Mammary epithelial cell (primary cell): ENCODE measurements at regions of chr12 and their contacts with region 1.

Region 1: DNA sequence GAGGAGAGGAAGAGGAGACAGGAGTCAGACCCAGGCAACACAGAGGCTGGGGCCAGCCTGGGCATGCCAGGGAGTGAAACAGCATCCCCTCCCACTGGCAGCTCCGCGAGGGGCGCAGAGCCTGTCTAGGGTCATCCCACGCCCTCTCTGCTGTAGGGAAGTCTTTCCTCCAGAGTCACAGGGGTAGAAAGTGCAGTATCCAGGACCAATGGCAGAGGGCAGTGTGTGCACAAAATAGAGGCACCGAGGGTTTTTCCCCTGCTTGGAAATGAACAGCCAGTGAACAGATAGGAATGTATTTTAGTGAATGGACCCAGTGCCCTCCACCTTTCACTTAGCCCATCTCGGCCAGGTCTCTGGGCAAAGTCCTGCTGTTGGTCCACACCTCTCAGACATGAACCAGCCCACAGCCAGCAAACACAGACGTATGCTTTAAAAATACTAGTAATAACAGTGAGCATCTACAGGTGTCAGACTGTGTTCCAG is 9.4 kb upstream of the KRT74 start:
- DNase-seq: peak; percentile 87
- H3K4me3 ChIP-seq: no peak overlapping the region
- H3K27ac ChIP-seq: peak overlapping the region; percentile 68
- H3K4me1 ChIP-seq: peaks cover 53% of the 10 kb centered on the region
- H3K27me3 ChIP-seq: no peaks in the 10 kb centered on the region
- CTCF ChIP-seq: peak; percentile 75 to 88

Region 2: GRCh38 chr12:52139552-52140062 is 443.4 kb before region 1 on chr12:
- CTCF ChIA-PET with region 1: no interaction called
- dilution Hi-C with region 1: no loop called
- in situ Hi-C with region 1: loop called in 1 of 2 experiments (anchors 5 kb)
- intact Hi-C with region 1: loop called (anchors 1 kb)
- DNase-seq: peak; percentile 53
- H3K4me3 ChIP-seq: no peak overlapping the region
- H3K27ac ChIP-seq: no peak overlapping the region
- H3K4me1 ChIP-seq: peaks cover 15% of the 10 kb centered on the region
- H3K27me3 ChIP-seq: no peaks in the 10 kb centered on the region
- CTCF ChIP-seq: peak; percentile 98

Region 3: DNA sequence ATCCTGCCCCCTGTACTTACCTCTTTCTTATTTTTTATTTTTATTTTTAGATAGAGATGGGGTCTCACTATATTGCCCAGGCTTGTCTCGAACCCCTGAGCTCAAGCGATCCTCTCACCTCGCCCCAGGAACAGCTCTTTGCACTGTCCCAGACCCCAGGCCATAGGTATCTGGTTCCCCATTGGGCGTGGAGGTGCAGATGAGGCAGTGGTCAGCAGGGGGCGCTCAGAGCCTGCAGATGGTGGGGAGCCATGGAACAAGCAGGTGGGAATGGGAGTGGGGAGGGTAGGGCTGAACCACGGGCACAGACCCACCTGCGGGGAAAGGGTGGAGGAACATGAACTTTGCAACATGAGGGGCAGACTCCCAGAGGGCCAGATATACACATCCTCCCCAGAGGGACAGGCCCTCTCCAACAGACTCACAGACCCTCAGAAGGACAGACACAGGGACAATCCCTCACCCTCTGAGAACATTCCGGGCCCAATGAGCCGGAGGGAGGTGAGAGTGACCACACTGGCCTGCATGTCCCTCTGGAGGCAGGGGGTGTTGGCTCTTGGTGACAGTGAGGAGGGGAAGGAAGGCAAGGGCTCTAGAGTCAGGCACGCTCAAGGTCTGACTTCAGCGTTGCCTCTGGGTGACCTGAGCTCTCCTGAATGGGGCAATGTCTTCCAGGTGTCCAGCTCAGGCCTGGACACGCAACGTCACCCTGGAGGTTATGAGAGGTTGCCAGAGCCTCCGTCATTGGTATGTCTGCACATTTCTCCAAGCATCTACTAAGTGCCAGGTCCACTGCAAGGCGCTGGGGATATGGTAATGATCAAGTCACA is 426.1 kb before region 1 on chr12:
- CTCF ChIA-PET with region 1: interaction called, 6 read pairs
- dilution Hi-C with region 1: no loop called
- in situ Hi-C with region 1: no loop called
- intact Hi-C with region 1: loop called (anchors 5 kb)
- DNase-seq: peak; percentile 80
- H3K4me3 ChIP-seq: no peak overlapping the region
- H3K27ac ChIP-seq: peak overlapping the region; percentile 96
- H3K4me1 ChIP-seq: peaks cover 46% of the 10 kb centered on the region
- H3K27me3 ChIP-seq: no peaks in the 10 kb centered on the region
- CTCF ChIP-seq: peak; percentile 90 to 98

Region 4: GRCh38 chr12:52380271-52380694 is 202.7 kb before region 1 on chr12:
- CTCF ChIA-PET with region 1: no interaction called
- dilution Hi-C with region 1: no loop called
- in situ Hi-C with region 1: loop called in 1 of 2 experiments (anchors 10 kb)
- intact Hi-C with region 1: loop called (anchors 2 kb)
- DNase-seq: peak; percentile 58
- H3K4me3 ChIP-seq: no peak overlapping the region
- H3K27ac ChIP-seq: no peak overlapping the region
- H3K4me1 ChIP-seq: no peaks in the 10 kb centered on the region
- H3K27me3 ChIP-seq: no peaks in the 10 kb centered on the region
- CTCF ChIP-seq: peak; percentile 73 to 88

Region 5: GRCh38 chr12:52442600-52443061 is 140.4 kb before region 1 on chr12:
- CTCF ChIA-PET with region 1: no interaction called
- dilution Hi-C with region 1: no loop called
- in situ Hi-C with region 1: no loop called
- intact Hi-C with region 1: loop called (anchors 5 kb)
- DNase-seq: peak; percentile 98
- H3K4me3 ChIP-seq: no peak overlapping the region
- H3K27ac ChIP-seq: peak overlapping the region; percentile 98
- H3K4me1 ChIP-seq: peaks cover 67% of the 10 kb centered on the region
- H3K27me3 ChIP-seq: no peaks in the 10 kb centered on the region
- CTCF ChIP-seq: peak; percentile 37 to 60

Region 6: DNA sequence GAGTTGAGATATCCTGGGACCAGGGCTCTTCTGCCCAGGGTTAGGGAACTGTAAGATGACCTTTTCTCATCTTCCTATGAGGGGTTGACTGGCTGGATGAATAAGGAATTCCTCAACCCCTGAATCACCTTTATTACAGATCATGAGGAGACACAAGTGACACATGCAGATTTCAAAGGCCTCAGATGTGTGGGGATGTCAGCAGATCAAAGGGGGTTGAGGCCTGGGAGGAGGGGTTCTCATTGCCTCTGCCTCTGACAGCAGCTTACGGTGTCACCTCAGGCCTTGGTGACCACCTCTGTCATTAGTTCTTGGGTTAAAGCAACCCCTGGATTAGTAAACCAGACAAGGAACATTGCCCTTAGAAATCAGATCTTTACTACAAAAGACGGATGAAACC is 20.3 kb after region 1 on chr12:
- CTCF ChIA-PET with region 1: no interaction called
- dilution Hi-C with region 1: no loop called
- in situ Hi-C with region 1: no loop called
- intact Hi-C with region 1: no loop called
- DNase-seq: no peak
- H3K4me3 ChIP-seq: no peak overlapping the region
- H3K27ac ChIP-seq: no peak overlapping the region
- H3K4me1 ChIP-seq: no peaks in the 10 kb centered on the region
- H3K27me3 ChIP-seq: peaks cover 12% of the 10 kb centered on the region
- CTCF ChIP-seq: no peak

Region 7: DNA sequence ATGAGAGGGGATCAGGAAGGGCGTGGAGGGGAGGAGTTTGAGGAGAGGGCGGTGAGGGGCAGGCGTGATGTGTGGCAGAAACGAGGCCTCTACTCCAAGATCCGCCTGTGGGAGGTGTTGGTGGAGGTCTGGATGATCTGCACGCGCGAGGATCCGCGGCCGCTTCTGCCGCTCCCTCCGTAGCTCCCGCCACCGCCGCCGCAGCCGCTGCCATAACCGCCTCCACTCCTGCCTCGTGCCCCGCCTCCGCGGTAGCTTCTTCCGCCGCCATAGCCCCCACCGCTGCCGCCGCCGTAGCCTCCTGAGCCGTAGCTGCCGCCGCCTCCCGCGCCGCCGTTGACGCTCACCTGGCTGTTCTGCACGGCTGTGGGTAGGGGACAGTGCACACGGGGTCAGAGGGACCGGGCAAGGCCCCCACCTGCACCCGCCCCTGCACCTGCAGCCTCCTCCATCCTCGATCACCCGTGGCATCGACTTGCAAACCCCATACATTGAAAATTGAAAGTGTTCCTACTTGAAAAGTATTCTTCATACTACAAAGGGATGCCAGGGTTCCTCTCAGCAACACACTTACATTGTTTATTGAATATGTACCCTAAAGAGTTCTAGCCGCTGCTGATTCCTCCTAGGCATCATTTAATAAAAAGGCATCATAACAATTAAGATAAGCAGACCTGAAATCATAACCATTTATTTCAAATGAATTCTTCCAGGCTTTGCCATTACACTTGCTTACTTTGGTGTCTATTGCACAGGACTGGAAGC is 108.2 kb after region 1 on chr12:
- CTCF ChIA-PET with region 1: no interaction called
- dilution Hi-C with region 1: no loop called
- in situ Hi-C with region 1: no loop called
- intact Hi-C with region 1: no loop called
- DNase-seq: no peak
- H3K4me3 ChIP-seq: no peak overlapping the region
- H3K27ac ChIP-seq: no peak overlapping the region
- H3K4me1 ChIP-seq: peaks cover 15% of the 10 kb centered on the region
- H3K27me3 ChIP-seq: peaks cover 11% of the 10 kb centered on the region
- CTCF ChIP-seq: no peak

Region 8: GRCh38 chr12:52865090-52865944 is 282.3 kb after region 1 on chr12:
- CTCF ChIA-PET with region 1: no interaction called
- dilution Hi-C with region 1: no loop called
- in situ Hi-C with region 1: no loop called
- intact Hi-C with region 1: loop called (anchors 1 kb)
- DNase-seq: peak; percentile 63
- H3K4me3 ChIP-seq: no peak overlapping the region
- H3K27ac ChIP-seq: no peak overlapping the region
- H3K4me1 ChIP-seq: peaks cover 23% of the 10 kb centered on the region
- H3K27me3 ChIP-seq: no peaks in the 10 kb centered on the region
- CTCF ChIP-seq: peak; percentile 87 to 92

Region 9: DNA sequence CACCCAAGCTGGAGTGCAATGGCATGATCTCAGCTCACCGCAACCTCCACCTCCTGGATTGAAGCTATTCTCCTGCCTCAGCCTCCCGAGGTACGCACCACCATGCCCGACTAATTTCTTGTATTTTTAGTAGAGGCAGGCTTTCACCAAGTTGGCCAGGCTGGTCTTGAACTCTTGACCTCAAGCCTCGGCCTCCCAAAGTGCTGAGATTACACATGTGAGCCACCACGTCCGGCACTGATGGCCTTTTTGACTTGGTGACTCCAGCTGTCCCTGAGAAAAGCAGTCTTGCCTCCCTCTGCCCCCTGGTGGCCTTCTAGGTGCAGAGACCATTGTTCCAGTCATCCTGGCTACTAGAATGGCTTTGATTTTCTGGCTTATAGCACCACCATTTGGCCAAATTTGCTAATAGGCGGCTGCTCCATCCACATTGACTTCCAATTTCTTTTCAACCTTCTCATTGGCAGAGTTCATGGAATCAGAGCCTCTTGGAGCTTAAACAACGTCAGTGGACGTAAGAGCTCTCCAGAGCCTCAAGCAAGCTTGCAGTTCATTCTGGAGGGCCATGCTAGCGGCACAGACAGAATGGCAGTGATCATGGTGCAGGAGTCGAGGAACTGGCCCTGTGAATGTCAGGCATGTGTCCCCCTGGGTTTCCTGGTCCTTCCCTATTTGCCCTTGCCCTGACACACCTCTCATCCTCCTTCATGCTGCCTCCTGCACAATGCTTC is 397.8 kb after region 1 on chr12:
- CTCF ChIA-PET with region 1: no interaction called
- dilution Hi-C with region 1: no loop called
- in situ Hi-C with region 1: loop called in 1 of 2 experiments (anchors 25 kb)
- intact Hi-C with region 1: loop called (anchors 5 kb)
- DNase-seq: peak; percentile 80
- H3K4me3 ChIP-seq: no peak overlapping the region
- H3K27ac ChIP-seq: no peak overlapping the region
- H3K4me1 ChIP-seq: no peaks in the 10 kb centered on the region
- H3K27me3 ChIP-seq: no peaks in the 10 kb centered on the region
- CTCF ChIP-seq: peak; percentile 99

Region 10: DNA sequence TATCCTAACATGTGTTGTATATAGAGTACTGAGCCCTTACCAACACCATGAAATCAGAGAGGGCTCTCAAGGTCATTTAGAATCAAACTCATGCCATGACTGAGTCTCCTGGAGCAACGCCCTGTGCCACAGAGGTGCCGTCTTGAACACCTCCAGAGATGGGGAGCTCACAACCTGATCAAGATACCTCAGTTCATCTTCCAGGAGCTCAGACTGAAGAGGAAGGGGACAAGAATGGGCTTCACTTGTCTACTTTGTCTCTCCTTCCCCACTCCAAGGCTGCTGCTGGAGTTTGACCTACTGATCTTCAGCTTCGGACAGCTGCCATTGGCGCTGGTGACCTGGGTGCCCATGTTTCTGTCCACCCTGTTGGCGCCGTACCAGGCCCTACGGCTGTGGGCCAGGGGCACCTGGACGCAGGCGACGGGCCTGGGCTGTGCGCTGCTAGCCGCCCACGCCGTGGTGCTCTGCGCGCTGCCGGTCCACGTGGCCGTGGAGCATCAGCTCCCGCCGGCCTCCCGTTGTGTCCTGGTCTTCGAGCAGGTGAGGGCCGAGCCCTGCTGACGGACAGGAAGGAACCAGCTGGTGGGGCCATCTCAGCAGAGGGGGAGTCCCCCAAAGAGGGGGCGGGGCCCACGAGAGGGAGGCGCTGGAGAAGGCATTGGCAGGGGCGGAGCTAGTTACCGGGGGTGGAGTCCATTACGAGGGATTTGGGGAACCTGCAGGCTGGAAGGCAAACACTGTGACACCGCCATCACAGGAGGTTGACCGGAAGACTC is 532.3 kb after region 1 on chr12:
- CTCF ChIA-PET with region 1: no interaction called
- dilution Hi-C with region 1: no loop called
- in situ Hi-C with region 1: no loop called
- intact Hi-C with region 1: no loop called
- DNase-seq: no peak
- H3K4me3 ChIP-seq: no peak overlapping the region
- H3K27ac ChIP-seq: no peak overlapping the region
- H3K4me1 ChIP-seq: no peaks in the 10 kb centered on the region
- H3K27me3 ChIP-seq: no peaks in the 10 kb centered on the region
- CTCF ChIP-seq: no peak